ENCODE measurements at regions of chr9 and their contacts with region 1.

Region 1: GRCh38 chr9:17509701-17510100 is 69.2 kb upstream of the SH3GL2 start:
- DNase-seq: no peak
- H3K4me3 ChIP-seq: no peak overlapping the region
- H3K27ac ChIP-seq: no peak overlapping the region
- H3K4me1 ChIP-seq: no peaks in the 10 kb centered on the region
- H3K27me3 ChIP-seq: no peaks in the 10 kb centered on the region
- CTCF ChIP-seq: no peak
- EP300 ChIP-seq: no peak
- POLR2A ChIP-seq: no peak

Region 2: DNA sequence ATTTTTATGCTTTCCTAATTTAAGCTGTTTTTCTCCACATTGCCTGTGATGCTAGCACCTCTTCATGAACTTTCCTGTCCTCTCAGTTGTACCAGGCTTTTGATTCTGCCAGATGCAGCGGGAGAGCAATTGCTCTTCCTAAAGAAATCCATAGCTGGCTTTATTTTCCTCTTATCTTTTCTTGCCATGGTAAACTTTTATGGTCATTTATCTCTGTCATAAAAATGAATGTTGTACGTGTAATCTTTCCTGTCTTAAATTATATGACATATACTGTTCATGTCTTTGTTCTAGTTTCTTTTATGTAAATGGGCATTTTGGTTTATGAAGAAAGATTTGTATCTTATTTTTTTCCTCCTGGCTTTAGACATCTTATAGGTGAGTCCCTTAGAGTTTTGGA is 196.6 kb after region 1 on chr9:
- in situ Hi-C with region 1: no loop called
- intact Hi-C with region 1: no loop called
- DNase-seq: no peak
- H3K4me3 ChIP-seq: no peak overlapping the region
- H3K27ac ChIP-seq: no peak overlapping the region
- H3K4me1 ChIP-seq: peaks cover 0 to 5% (median 1%) of the 10 kb centered on the region in 4 donors
- H3K27me3 ChIP-seq: peaks cover 11% of the 10 kb centered on the region
- CTCF ChIP-seq: no peak
- EP300 ChIP-seq: no peak
- POLR2A ChIP-seq: no peak

Region 3: DNA sequence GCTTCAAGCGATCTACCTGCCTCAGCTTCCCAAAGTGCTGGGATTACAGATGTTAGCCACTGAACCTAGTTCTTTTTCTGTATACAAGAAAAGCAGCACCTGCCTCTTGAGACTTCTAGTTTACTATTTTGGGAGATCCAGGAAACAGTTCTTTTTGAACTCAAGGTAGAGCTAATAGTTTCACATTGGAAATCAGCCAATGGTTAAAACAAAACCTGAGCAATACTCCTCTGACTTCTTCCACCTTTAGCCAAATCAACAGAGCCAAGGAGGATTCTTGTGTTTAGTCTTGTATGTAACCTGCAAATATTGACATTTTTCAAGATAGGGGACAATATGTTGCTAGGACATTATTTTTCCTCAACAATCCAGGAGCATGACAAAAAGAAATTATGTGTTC is 418.5 kb after region 1 on chr9:
- in situ Hi-C with region 1: no loop called
- intact Hi-C with region 1: loop called (anchors 5 kb)
- DNase-seq: no peak
- H3K4me3 ChIP-seq: no peak overlapping the region
- H3K27ac ChIP-seq: no peak overlapping the region
- H3K4me1 ChIP-seq: no peaks in the 10 kb centered on the region
- H3K27me3 ChIP-seq: no peaks in the 10 kb centered on the region
- CTCF ChIP-seq: no peak
- EP300 ChIP-seq: no peak
- POLR2A ChIP-seq: no peak

Measured in transverse colon (tissue), 4 donors.